A549 (cell line): ENCODE measurements at regions of chr15 and their contacts with region 1.

Region 1: DNA sequence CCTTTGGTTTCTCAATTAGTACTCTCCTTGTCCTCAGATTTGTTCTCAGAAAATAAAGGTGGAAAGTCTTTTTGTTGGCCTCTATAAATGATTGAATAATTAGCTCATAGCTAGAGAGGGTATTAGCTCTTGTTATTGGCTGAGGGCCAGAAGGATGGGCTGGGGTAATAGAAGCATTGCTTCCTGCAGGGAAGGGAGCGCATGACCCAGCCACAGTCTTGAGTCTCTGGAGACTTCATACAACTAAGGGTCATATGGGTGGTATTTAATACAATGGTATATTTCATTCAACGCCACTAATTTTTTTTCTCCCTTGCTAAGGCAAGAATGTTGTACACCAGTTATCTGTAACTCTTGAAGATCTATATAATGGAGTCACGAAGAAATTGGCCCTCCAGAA is 8.4 kb downstream of the DNAJA4 start:
- DNase-seq: no peak
- ATAC-seq: no peak
- H3K4me3 ChIP-seq: no peak overlapping the region
- H3K27ac ChIP-seq: no peak overlapping the region
- H3K4me1 ChIP-seq: peaks cover 6% of the 10 kb centered on the region; the same call in 1 of the 3 replicates
- CTCF ChIP-seq: no peak
- EP300 ChIP-seq: no peak
- POLR2A ChIP-seq: no peak
- RAD21 ChIP-seq: no peak

Region 2: DNA sequence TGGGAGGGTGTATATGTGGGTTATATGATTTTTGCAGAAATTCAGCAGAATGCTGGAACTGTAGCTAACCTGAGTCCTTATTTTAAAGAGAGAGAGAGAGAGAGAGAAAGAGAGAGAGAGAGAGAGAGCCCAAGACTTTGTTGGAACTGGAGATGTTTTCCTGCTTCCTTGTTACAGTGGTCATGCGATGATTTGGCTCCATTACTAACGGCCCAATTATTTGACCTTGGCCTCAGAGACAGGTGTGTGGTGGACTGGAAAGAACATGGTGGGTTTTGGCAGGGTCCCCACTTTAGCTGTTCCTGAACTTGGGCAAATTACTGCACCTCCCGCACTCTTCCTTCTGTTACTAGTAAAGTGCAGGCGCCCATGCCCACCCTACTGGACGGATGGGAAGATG is 23.6 kb before region 1 on chr15:
- CTCF ChIA-PET with region 1: no interaction called
- POLR2A ChIA-PET with region 1: no interaction called
- DNase-seq: no peak
- ATAC-seq: no peak
- H3K4me3 ChIP-seq: no peak overlapping the region
- H3K27ac ChIP-seq: no peak overlapping the region
- H3K4me1 ChIP-seq: no peaks in the 10 kb centered on the region
- CTCF ChIP-seq: no peak
- EP300 ChIP-seq: no peak
- POLR2A ChIP-seq: no peak
- RAD21 ChIP-seq: no peak

Region 3: GRCh38 chr15:78259232-78259631 is 13.5 kb before region 1 on chr15:
- CTCF ChIA-PET with region 1: no interaction called
- POLR2A ChIA-PET with region 1: no interaction called
- DNase-seq: no peak
- ATAC-seq: no peak
- H3K4me3 ChIP-seq: no peak overlapping the region
- H3K27ac ChIP-seq: no peak overlapping the region
- H3K4me1 ChIP-seq: no peaks in the 10 kb centered on the region
- CTCF ChIP-seq: no peak
- EP300 ChIP-seq: no peak
- POLR2A ChIP-seq: no peak
- RAD21 ChIP-seq: no peak

Region 4: DNA sequence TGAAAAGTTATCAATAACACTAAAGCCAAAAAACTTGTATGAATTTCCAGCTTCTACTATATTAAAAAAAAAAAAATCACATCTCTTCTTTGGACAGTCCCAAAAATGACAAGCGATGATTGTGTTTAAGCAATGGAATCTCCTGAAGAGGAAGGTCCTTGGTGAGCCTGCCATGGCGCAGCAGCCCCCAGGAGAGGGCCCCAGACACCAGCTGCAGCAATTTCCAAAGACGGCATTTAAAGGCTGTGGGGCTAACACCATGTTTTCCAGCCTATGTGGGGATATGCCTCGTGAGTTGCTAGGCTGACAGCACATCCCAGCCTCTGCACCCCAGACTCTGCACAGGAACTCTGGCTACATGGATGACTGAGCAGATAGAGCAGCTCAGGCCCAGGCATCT is 12.0 kb after region 1 on chr15:
- CTCF ChIA-PET with region 1: interaction called, 25 read pairs
- POLR2A ChIA-PET with region 1: no interaction called
- DNase-seq: no peak
- ATAC-seq: no peak; a peak in 1 of 6 replicates
- H3K4me3 ChIP-seq: no peak overlapping the region
- H3K27ac ChIP-seq: no peak overlapping the region
- H3K4me1 ChIP-seq: no peaks in the 10 kb centered on the region
- CTCF ChIP-seq: no peak; the same call in 2 of the 3 replicates
- EP300 ChIP-seq: no peak
- POLR2A ChIP-seq: no peak
- RAD21 ChIP-seq: 0 out of 5 replicates have a peak, but pooled peaks of 1 of the 2 experiments have one; percentile 10